PC-3 (cell line): ENCODE measurements at regions of chr14 and their contacts with region 1.

Region 1: DNA sequence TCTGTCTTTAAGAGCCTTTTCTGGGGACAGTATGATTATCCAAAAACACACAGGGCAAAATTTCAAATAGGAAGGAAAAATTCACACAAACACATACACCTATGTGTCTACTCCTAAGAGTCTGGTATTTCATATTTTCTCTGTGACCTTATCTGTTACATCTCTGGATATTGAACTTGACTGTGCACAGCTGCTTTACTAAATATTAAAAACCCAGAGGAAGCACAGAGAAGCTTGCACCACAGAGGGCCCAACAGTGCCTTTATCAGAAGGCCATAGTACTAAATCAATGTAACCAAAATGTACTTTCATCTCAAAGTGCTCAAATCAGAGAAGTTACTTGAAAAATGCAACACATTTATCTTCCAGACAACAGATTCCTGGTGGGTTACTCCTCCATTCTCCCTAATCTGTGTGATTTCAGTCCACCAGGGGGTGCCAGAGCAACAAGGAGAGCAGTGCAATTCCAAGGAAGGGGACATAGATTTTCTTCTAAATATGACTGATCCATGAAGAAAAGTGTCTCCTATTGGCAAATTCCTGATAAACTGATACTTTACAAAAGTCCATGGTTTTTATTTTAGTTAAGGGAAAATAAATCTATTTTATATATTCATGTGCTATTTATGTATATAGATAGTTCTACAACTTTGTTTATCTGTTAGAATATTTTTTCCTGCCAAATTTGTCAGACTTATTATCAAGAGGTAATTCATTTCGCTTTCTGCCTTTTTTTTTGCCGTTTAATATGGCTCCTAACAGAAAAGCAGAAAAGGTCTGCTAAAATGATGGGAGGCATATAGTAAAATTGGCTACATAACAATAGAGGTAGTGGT is 617.6 kb downstream of the LRFN5 start:
- DNase-seq: peak; percentile 90
- ATAC-seq: peak; percentile 57
- H3K4me3 ChIP-seq: no peak overlapping the region
- H3K27ac ChIP-seq: peak overlapping the region; percentile 38
- H3K4me1 ChIP-seq: peaks cover 26% of the 10 kb centered on the region
- H3K27me3 ChIP-seq: no peaks in the 10 kb centered on the region
- CTCF ChIP-seq: peak; percentile 96

Region 2: DNA sequence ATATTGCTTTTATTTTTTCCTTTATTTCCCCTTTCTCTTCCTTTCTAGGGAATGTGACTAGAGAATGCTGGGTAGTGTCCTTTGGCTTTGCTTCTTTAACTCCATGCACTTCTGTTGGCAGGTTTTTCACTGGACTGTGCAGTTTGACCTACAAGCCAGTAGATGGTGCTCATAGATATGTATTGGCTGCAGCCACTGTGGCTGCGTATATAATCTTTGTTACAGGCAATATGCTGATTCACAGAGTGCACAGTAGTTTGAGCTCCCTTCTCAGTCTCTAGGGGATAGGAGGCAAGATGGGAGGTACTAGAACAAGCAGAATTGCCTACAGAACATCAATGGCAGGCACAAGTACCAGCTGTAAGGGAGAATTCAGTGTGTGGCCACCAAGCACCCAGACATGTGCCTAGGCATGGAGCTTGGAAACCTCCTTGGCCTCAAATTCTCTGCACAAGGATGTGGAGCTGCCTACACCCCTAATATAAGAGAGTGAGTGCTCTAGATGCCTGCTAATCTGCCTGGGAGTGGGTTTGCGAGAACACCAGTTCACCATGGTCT is 114.0 kb before region 1 on chr14:
- CTCF ChIA-PET with region 1: interaction called, 5 read pairs
- POLR2A ChIA-PET with region 1: no interaction called
- intact Hi-C with region 1: loop called (anchors 1 kb)
- DNase-seq: peak; percentile 85
- ATAC-seq: peak; percentile 78
- H3K4me3 ChIP-seq: no peak overlapping the region
- H3K27ac ChIP-seq: no peak overlapping the region
- H3K4me1 ChIP-seq: peaks cover 17% of the 10 kb centered on the region
- H3K27me3 ChIP-seq: no peaks in the 10 kb centered on the region
- CTCF ChIP-seq: peak; percentile 95

Region 3: DNA sequence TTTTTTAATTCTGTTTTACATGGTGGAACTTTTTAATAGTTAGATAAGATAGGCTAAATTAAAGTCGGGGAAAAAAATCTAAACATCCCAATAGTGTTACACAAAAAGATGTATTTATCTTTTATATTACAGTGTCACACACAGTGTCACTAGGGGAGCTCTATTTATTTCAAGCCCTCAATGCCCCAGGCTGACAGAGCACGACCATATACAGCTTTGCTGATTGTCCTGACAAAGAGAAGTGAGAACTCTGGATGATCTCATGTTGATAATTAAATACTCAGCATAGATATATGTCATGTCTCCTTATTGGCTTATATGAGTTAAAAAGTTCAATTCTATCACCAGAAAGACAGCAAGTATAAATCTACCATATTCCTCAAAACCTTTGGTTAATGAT is 23.3 kb before region 1 on chr14:
- CTCF ChIA-PET with region 1: no interaction called
- POLR2A ChIA-PET with region 1: no interaction called
- intact Hi-C with region 1: no loop called
- DNase-seq: no peak
- ATAC-seq: no peak
- H3K4me3 ChIP-seq: no peak overlapping the region
- H3K27ac ChIP-seq: no peak overlapping the region
- H3K4me1 ChIP-seq: no peaks in the 10 kb centered on the region
- H3K27me3 ChIP-seq: no peaks in the 10 kb centered on the region
- CTCF ChIP-seq: no peak

Region 4: GRCh38 chr14:42806909-42807315 is 582.6 kb after region 1 on chr14:
- CTCF ChIA-PET with region 1: no interaction called
- POLR2A ChIA-PET with region 1: no interaction called
- intact Hi-C with region 1: loop called (anchors 2 kb)
- DNase-seq: peak; percentile 63
- ATAC-seq: peak; percentile 96
- H3K4me3 ChIP-seq: no peak overlapping the region
- H3K27ac ChIP-seq: peak overlapping the region; percentile 36
- H3K4me1 ChIP-seq: 0 out of 2 replicates have a peak, but pooled peaks cover 7% of the 10 kb centered on the region
- H3K27me3 ChIP-seq: no peaks in the 10 kb centered on the region
- CTCF ChIP-seq: no peak

Region 5: GRCh38 chr14:42911396-42912041 is 687.2 kb after region 1 on chr14:
- CTCF ChIA-PET with region 1: no interaction called
- POLR2A ChIA-PET with region 1: no interaction called
- intact Hi-C with region 1: loop called (anchors 1 kb)
- DNase-seq: peak; percentile 39
- ATAC-seq: peak; percentile 98
- H3K4me3 ChIP-seq: no peak overlapping the region
- H3K27ac ChIP-seq: no peak overlapping the region
- H3K4me1 ChIP-seq: no peaks in the 10 kb centered on the region
- H3K27me3 ChIP-seq: no peaks in the 10 kb centered on the region
- CTCF ChIP-seq: peak; percentile 54

Region 6: GRCh38 chr14:43795600-43796228 is 1571.4 kb after region 1 on chr14:
- CTCF ChIA-PET with region 1: no interaction called
- POLR2A ChIA-PET with region 1: no interaction called
- intact Hi-C with region 1: loop called (anchors 10 kb)
- DNase-seq: peak; percentile 51
- ATAC-seq: peak; percentile 73
- H3K4me3 ChIP-seq: no peak overlapping the region
- H3K27ac ChIP-seq: no peak overlapping the region
- H3K4me1 ChIP-seq: no peaks in the 10 kb centered on the region
- H3K27me3 ChIP-seq: no peaks in the 10 kb centered on the region
- CTCF ChIP-seq: peak; percentile 63